ENCODE measurements at regions of chr14 and their contacts with region 1.

Region 1: DNA sequence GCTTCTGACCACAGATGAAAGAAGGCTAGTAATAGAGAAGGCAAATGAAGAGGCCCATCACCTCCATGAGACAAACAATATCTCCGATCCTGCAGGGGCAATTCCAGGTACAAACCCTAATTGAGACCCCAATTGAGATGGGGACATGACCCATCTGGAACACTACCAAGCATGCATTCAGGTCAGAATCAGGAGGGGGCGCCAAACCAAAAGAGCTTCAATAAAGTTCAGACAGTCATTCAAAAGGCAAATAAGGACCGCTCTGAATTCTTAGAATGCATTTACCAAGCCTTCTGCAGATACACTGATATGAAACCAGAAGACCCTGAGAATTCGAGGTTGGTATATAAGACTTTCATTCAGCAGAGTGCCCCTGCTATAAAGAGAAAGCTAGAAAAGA is 10.2 kb upstream of the EDDM3B start:
- DNase-seq: peak; percentile 51
- H3K4me3 ChIP-seq: no peak overlapping the region
- H3K27ac ChIP-seq: no peak overlapping the region
- H3K4me1 ChIP-seq: no peaks in the 10 kb centered on the region
- H3K27me3 ChIP-seq: peaks cover 7% of the 10 kb centered on the region in 2 experiments
- CTCF ChIP-seq: peak; percentile 43 to 59
- POLR2A ChIP-seq: no peak

Region 2: GRCh38 chr14:20697273-20698017 is 60.5 kb before region 1 on chr14:
- CTCF ChIA-PET with region 1: interaction called, 13 read pairs
- POLR2A ChIA-PET with region 1: no interaction called
- dilution Hi-C with region 1: no loop called
- intact Hi-C with region 1: loop called (anchors 1 kb)
- DNase-seq: peak; percentile 89
- H3K4me3 ChIP-seq: no peak overlapping the region
- H3K27ac ChIP-seq: peak overlapping the region; percentile 30
- H3K4me1 ChIP-seq: peaks cover 11% of the 10 kb centered on the region
- H3K27me3 ChIP-seq: no peaks in the 10 kb centered on the region
- CTCF ChIP-seq: peak; percentile 73 to 90
- POLR2A ChIP-seq: no peak

Region 3: DNA sequence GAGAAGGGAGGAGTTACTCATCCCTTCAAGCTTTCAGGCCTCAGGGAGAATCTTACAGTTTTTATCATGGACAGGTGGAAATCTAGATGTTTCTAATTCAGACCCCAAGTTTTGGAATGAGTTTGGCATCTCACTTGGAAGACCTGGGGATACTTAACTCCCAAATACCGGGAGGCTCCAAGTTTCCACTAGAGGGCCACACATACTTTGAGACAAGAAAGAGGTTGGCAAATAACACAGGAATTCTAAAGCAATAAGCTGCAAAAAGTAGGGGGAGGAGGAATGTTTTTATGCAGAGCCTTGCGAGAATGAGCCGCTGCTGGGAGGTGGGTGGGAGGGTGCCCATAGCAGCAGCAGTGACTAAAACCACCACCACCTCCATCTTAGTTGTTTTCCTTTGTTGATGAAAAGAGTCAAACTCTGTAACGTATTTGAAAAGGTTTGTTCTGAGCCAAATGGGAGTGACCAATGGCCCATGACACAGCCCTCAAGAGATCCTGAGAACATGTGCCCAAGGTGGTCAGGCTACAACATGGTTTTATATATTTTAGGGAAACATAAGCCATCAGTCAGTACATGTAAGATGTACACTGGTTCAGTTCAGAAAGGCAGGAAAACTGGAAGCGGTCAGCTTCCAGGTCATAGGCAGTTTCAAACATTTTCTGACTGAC is 78.8 kb after region 1 on chr14:
- CTCF ChIA-PET with region 1: interaction called, 7 read pairs
- POLR2A ChIA-PET with region 1: no interaction called
- dilution Hi-C with region 1: no loop called
- intact Hi-C with region 1: loop called (anchors 5 kb)
- DNase-seq: peak; percentile 47
- H3K4me3 ChIP-seq: no peak overlapping the region
- H3K27ac ChIP-seq: no peak overlapping the region
- H3K4me1 ChIP-seq: no peaks in the 10 kb centered on the region
- H3K27me3 ChIP-seq: no peaks in the 10 kb centered on the region
- CTCF ChIP-seq: peak; percentile 42 to 55
- POLR2A ChIP-seq: no peak

Region 4: DNA sequence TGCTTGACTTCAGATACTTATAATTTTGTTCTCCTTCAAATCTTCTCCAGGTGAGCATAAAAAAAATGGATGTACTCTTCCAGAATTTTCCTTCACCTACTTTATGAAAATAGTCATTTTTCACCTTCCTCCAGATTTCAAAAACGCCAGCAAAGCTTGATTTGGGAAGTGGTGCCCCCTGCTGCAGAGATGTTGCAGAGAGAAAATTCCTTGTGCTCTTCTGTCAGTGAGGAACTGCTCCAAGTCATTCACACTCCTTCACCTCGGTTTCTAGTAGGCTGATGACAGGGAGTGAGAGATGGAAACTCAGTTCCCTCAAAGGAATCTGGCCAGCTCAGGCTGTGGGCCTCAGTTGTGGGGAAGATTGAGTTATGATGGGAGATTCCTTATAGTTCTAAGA is 109.0 kb after region 1 on chr14:
- CTCF ChIA-PET with region 1: interaction called, 10 read pairs
- POLR2A ChIA-PET with region 1: no interaction called
- dilution Hi-C with region 1: no loop called
- intact Hi-C with region 1: loop called (anchors 5 kb)
- DNase-seq: peak; percentile 24
- H3K4me3 ChIP-seq: no peak overlapping the region
- H3K27ac ChIP-seq: no peak overlapping the region
- H3K4me1 ChIP-seq: no peaks in the 10 kb centered on the region
- H3K27me3 ChIP-seq: peaks cover 7 to 22% of the 10 kb centered on the region in 2 experiments
- CTCF ChIP-seq: peak; percentile 31 to 51
- POLR2A ChIP-seq: no peak

Region 5: GRCh38 chr14:20873370-20874177 is 115.6 kb after region 1 on chr14:
- CTCF ChIA-PET with region 1: interaction called, 13 read pairs
- POLR2A ChIA-PET with region 1: no interaction called
- dilution Hi-C with region 1: no loop called
- intact Hi-C with region 1: loop called (anchors 5 kb)
- DNase-seq: peak; percentile 73
- H3K4me3 ChIP-seq: peak overlapping the region in 1 of 3 experiments; percentile 15
- H3K27ac ChIP-seq: no peak overlapping the region
- H3K4me1 ChIP-seq: peaks cover 7% of the 10 kb centered on the region
- H3K27me3 ChIP-seq: peaks cover 5 to 8% of the 10 kb centered on the region in 2 experiments
- CTCF ChIP-seq: peak; percentile 87 to 95
- POLR2A ChIP-seq: no peak

Region 6: DNA sequence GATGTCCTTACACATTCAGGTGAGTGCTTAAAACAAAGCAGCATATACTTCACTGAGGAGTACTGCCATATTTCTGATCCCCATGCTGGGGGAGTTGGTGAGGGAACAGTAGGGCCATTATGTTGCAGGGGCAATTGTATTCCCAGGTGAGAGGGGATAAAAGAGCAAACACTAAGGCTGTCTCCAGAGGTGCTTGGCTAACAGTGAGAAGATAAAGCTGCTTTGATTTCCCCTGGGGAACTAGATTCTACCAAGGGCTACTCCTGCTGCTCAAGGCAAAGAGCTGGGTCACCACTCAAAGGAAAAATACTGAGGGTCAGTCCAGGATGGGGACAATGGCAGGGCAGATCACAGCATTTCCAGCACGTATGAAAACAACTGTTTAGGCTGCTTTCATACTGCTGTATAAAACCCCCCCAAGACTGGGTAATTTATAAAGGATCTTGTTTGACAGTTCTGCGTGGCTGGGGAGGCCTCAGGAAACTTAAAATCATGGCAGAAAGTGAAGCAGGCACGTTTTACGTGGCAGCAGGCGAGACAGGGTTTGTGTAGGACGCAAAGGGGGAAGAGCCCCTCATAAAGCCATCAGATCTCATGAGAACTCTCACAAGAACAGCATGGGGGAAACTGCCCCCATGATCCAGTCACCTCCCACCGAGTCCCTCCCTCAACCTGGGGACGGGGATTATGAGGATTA is 445.7 kb after region 1 on chr14:
- CTCF ChIA-PET with region 1: no interaction called
- POLR2A ChIA-PET with region 1: no interaction called
- dilution Hi-C with region 1: no loop called
- intact Hi-C with region 1: no loop called
- DNase-seq: no peak
- H3K4me3 ChIP-seq: no peak overlapping the region
- H3K27ac ChIP-seq: no peak overlapping the region
- H3K4me1 ChIP-seq: no peaks in the 10 kb centered on the region
- H3K27me3 ChIP-seq: no peaks in the 10 kb centered on the region
- CTCF ChIP-seq: no peak
- POLR2A ChIP-seq: no peak

Measured in endothelial cell of umbilical vein (primary cell).